Activated CD8-positive, alpha-beta T cell treated with anti-CD3 and anti-CD28 coated beads, Interleukin-2, amount 10 ng/mL, durations not matched to agents 7 days and 5 days (primary cell): ENCODE measurements at regions of chr22 and their contacts with region 1.

Region 1: GRCh38 chr22:29040385-29041275 is 21.0 kb downstream of the C22orf31 start:
- DNase-seq: peak; percentile 81
- ATAC-seq: peak; percentile 84
- H3K4me3 Mint-ChIP-seq: no peak overlapping the region
- H3K27ac Mint-ChIP-seq: no peak overlapping the region
- H3K4me1 Mint-ChIP-seq: peaks cover 13% of the 10 kb centered on the region
- H3K27me3 Mint-ChIP-seq: peaks cover 11% of the 10 kb centered on the region

Region 2: GRCh38 chr22:28497188-28497587 is 543.4 kb before region 1 on chr22:
- CTCF ChIA-PET with region 1: no interaction called
- POLR2A ChIA-PET with region 1: no interaction called
- DNase-seq: no peak
- ATAC-seq: no peak
- H3K4me3 Mint-ChIP-seq: no peak overlapping the region
- H3K27ac Mint-ChIP-seq: no peak overlapping the region
- H3K4me1 Mint-ChIP-seq: no peaks in the 10 kb centered on the region
- H3K27me3 Mint-ChIP-seq: peaks cover 35% of the 10 kb centered on the region

Region 3: DNA sequence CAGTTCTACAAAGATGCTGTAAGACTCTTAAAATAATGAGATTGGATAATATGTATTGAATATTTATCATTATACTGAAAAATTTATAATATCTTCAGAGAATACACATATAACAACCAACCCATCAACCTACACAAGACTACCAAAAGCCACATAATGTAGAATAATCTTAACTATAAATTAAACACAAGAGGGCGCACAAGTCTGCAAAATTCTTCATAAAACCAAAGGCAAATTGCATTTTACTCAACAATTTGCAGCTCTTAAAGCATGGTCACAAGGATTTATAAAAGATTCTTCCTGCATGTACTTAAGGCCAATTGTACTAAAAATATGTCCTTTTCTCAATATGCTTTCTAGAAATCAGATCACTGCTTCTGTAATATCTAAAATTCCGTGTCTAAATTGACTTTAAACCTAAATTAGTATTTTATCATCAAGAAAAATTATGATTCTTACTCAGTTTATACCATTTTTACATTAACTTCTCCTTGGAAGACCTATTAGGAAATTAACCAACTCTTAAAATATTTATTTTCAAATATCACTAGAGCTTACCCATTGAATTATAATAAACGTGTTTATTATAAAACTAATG is 440.0 kb before region 1 on chr22:
- CTCF ChIA-PET with region 1: interaction called, 58 read pairs
- POLR2A ChIA-PET with region 1: no interaction called
- DNase-seq: peak; percentile 42
- ATAC-seq: peak; percentile 49
- H3K4me3 Mint-ChIP-seq: no peak overlapping the region
- H3K27ac Mint-ChIP-seq: no peak overlapping the region
- H3K4me1 Mint-ChIP-seq: no peaks in the 10 kb centered on the region
- H3K27me3 Mint-ChIP-seq: peaks cover 31% of the 10 kb centered on the region

Region 4: DNA sequence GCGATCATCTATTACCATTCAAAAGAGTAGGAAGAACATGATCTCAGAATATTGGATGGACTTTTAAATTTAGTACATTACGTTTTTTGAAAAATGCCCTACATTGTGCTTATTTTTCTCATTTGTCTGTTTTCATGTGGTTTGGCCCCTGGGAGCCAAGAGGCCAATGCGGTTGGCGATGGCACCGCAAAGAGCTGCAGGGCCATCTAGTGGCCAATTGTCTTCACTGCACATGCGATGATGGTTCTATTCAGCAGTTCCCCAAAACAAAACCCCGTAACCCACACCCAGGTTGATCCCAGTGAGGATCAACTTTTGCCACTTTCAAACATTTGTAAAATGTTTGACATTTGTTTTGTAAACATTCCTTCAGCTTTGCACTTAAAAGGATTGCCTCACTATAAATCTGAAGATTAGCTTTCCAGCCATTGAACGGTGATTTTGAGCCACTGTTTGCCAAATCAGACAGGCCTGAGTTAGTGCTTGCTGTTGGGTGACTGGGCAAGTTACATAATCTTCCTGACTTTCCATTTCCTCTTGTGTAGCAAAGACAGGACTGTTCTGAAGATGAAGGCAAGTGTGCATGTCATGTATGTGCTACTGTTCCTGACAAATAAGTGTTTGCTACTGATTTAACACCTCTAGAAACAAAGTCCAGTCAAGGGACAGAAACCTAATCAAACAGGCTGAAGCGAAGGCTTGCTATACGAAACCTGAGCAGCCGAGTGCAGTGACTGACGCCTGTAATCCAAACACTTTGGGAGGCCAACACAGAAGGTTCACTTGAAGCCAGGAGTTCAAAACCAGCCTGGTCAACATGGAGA is 211.1 kb before region 1 on chr22:
- CTCF ChIA-PET with region 1: interaction called, 13 read pairs
- POLR2A ChIA-PET with region 1: no interaction called
- DNase-seq: peak; percentile 86
- ATAC-seq: peak; percentile 80
- H3K4me3 Mint-ChIP-seq: no peak overlapping the region
- H3K27ac Mint-ChIP-seq: peak overlapping the region; percentile 55
- H3K4me1 Mint-ChIP-seq: peaks cover 48% of the 10 kb centered on the region
- H3K27me3 Mint-ChIP-seq: no peaks in the 10 kb centered on the region

Region 5: GRCh38 chr22:29016067-29016938 is 24.3 kb before region 1 on chr22:
- CTCF ChIA-PET with region 1: interaction called, 10 read pairs
- POLR2A ChIA-PET with region 1: no interaction called
- DNase-seq: peak; percentile 66
- ATAC-seq: peak; percentile 63
- H3K4me3 Mint-ChIP-seq: peak overlapping the region; percentile 45
- H3K27ac Mint-ChIP-seq: peak overlapping the region; percentile 90
- H3K4me1 Mint-ChIP-seq: peaks cover 31% of the 10 kb centered on the region
- H3K27me3 Mint-ChIP-seq: peaks cover 14% of the 10 kb centered on the region

Region 6: DNA sequence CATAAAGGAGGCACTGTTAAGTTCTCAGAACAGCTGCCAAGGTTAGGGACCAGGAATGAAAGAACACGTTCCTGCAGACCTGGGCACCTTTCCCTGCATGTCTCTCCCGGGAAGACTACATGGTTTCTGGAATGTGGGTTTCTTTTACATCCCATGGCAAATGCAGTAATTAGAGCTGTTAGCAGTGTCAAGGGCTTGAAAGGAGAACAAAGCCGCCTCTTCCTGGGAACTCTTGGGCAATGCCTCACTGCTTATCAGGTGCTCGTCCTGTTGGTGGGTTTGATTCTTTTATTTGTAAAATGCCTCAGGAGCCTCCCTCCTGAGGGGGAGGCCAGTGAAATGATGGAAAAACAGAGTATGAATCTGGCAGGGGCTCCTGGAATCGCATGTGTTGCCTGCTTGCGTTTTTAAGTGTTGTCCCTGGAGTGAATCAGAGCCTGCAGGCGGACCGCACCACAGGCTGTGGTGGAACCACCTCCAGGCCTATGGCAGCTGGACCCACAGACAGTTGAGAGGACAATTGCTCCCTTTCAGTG is 21.7 kb after region 1 on chr22:
- CTCF ChIA-PET with region 1: no interaction called
- POLR2A ChIA-PET with region 1: no interaction called
- DNase-seq: no peak
- ATAC-seq: no peak
- H3K4me3 Mint-ChIP-seq: no peak overlapping the region
- H3K27ac Mint-ChIP-seq: no peak overlapping the region
- H3K4me1 Mint-ChIP-seq: peaks cover 12% of the 10 kb centered on the region
- H3K27me3 Mint-ChIP-seq: peaks cover 52% of the 10 kb centered on the region

Region 7: DNA sequence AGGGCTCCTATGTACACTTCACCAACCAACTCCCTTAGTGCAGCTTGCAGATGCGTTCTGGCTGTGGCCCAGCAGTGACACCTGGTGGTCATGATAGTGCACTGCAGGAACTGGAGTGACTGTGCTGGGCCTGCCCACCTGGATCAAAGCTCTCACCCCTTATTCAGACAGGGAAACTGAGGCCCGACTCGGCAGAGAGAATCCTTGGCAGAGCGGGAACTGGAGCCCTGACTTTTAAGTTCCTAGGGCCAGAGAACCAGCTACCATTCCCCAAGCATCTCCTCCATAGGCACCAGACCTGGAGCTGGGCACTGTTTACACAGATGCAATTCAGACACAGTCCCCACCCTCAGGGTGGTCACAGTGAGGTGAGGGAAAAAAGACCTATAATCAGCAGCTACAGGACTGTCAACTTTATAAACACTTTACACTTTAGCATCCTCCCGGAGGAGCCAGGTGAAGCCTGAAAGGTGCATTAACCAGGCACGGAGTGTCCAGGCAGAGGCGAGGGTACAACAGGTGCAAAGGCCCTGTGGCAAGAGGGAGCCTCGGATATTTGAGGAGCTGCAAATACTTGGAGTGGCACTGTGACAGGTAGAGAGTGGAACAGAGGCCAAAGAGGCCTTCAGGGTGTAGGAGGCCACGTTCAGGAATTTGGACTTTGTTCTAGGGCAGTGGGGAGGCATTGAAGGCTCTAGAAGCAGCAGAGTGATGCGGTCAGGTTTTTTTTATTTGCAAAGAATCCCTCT is 205.2 kb after region 1 on chr22:
- CTCF ChIA-PET with region 1: interaction called, 25 read pairs
- POLR2A ChIA-PET with region 1: no interaction called
- DNase-seq: peak; percentile 79
- ATAC-seq: peak; percentile 86
- H3K4me3 Mint-ChIP-seq: no peak overlapping the region
- H3K27ac Mint-ChIP-seq: no peak overlapping the region
- H3K4me1 Mint-ChIP-seq: peaks cover 2% of the 10 kb centered on the region
- H3K27me3 Mint-ChIP-seq: peaks cover 15% of the 10 kb centered on the region